ENCODE measurements at regions of chr22 and their contacts with region 1.

Region 1: DNA sequence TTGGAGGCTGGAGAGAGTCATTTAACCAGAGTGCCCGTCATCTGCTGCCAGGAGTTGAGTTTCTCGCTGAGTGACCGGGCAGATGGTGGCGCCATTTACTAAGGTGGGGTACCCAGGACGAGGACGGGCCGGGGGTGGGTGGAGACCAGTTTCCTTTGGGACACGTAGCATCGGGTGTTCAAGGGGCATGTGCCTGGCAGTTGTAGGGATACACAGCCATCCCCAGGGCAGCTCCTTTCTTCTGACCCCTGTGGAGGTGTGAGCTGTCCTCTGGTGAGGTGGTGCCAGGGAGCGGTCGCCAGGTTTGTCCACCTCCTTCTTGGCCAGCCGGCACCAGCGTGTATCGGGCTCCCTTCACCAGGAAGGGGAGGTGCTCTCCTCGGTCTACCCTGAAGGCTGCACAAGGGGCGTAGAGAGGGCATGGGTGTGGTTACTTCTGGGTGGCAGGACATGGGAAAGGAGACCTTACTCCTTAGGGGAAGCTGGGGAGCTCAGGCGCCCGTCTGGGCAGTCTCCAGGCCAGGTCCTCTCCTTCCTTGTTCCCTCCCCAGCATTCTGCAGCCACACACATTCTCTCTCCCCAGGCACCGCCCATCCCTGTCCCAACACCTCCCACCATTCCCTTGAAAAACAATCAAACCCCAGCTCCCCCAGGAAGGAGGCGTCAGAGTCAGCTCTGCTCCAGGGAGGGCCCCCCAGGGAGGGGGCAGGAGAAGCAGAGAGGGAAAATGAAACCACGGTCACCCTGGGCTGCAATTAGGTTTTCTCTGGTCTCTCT is 10.3 kb upstream of the MB start:
- DNase-seq: peak; percentile 90
- H3K4me3 ChIP-seq: peak overlapping the region; percentile 43 to 58 (median 54)
- H3K27ac ChIP-seq: peak overlapping the region; percentile 88 to 96 (median 91)
- H3K4me1 ChIP-seq: peaks cover 7 to 16% (median 13%) of the 10 kb centered on the region in 4 donors
- H3K27me3 ChIP-seq: no peaks in the 10 kb centered on the region
- CTCF ChIP-seq: peak; percentile 37 to 58 (median 43)
- EP300 ChIP-seq: no peak
- POLR2A ChIP-seq: peak; percentile 80

Region 2: DNA sequence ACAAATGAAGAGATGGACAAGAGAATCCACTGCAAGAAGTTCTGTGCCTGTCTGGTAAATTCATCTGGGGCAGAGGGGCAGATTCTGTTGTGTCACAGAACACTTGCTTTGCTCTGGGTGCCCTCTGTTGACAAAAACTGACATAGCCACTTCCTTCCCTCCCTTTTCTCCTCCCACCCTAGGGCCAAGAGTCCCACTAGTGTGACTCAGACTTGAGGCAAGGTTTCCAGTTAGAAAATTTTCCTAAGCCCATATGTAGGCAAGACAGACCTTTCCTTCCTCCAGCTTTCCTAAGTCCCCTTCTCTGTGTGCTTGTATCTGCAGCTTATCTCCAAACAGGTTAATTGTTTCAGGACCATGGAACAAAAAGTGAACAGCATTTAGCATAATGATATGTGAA is 294.3 kb after region 1 on chr22:
- in situ Hi-C with region 1: loop called (anchors 5 to 25 kb)
- intact Hi-C with region 1: no loop called
- DNase-seq: peak; percentile 70
- H3K4me3 ChIP-seq: no peak overlapping the region
- H3K27ac ChIP-seq: peak overlapping the region; percentile 30 to 70 (median 60)
- H3K4me1 ChIP-seq: peaks cover 0 to 48% (median 21%) of the 10 kb centered on the region in 4 donors
- H3K27me3 ChIP-seq: no peaks in the 10 kb centered on the region
- CTCF ChIP-seq: peak; percentile 50 to 62 (median 56)
- EP300 ChIP-seq: no peak
- POLR2A ChIP-seq: no peak